Heart right ventricle (tissue), 16 donors: ENCODE measurements at regions of chr12 and their contacts with region 1.

Region 1: DNA sequence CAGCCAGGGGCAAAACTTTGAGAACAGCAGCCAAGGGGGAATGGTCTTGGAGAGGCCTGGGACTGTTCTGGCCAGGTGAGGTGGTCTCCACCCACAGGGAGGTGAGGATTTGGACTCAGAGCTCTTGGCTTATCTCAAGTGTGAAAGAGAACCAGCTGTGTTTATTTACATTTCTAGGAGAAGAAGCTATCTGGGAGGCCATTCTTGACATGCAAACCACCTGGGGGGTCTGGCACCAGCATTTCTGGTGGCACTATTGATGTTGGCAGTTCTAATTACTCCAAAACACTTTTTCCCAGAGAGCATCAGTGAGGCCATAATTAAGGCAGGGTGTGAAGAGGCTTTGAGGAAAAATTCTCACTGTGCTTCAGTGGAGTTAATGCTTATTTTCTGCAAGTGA is 95.1 kb downstream of the CAND1 start:
- DNase-seq: no peak
- ATAC-seq: peak in 1 of 8 donors; percentile 23
- H3K4me3 ChIP-seq: no peak overlapping the region
- H3K27ac ChIP-seq: no peak overlapping the region
- H3K4me1 ChIP-seq: no peaks in the 10 kb centered on the region
- H3K27me3 ChIP-seq: no peaks in the 10 kb centered on the region
- CTCF ChIP-seq: no peak

Region 2: GRCh38 chr12:67415473-67415872 is 51.2 kb after region 1 on chr12:
- intact Hi-C with region 1: loop called in 7 of 10 experiments (anchors 5 to 10 kb)
- DNase-seq: peak in 1 of 2 donors; percentile 33
- ATAC-seq: peak in 7 of 8 donors; percentile 58 to 77 (median 71)
- H3K4me3 ChIP-seq: no peak overlapping the region
- H3K27ac ChIP-seq: no peak overlapping the region
- H3K4me1 ChIP-seq: peaks cover 0 to 26% (median 10%) of the 10 kb centered on the region in 9 donors
- H3K27me3 ChIP-seq: no peaks in the 10 kb centered on the region
- CTCF ChIP-seq: peak in 8 of 9 donors; percentile 28 to 63 (median 50)